Activated CD8-positive, alpha-beta T cell treated with anti-CD3 and anti-CD28 coated beads for 36 hours (primary cell): ENCODE measurements at regions of chr14 and their contacts with region 1.

Region 1: DNA sequence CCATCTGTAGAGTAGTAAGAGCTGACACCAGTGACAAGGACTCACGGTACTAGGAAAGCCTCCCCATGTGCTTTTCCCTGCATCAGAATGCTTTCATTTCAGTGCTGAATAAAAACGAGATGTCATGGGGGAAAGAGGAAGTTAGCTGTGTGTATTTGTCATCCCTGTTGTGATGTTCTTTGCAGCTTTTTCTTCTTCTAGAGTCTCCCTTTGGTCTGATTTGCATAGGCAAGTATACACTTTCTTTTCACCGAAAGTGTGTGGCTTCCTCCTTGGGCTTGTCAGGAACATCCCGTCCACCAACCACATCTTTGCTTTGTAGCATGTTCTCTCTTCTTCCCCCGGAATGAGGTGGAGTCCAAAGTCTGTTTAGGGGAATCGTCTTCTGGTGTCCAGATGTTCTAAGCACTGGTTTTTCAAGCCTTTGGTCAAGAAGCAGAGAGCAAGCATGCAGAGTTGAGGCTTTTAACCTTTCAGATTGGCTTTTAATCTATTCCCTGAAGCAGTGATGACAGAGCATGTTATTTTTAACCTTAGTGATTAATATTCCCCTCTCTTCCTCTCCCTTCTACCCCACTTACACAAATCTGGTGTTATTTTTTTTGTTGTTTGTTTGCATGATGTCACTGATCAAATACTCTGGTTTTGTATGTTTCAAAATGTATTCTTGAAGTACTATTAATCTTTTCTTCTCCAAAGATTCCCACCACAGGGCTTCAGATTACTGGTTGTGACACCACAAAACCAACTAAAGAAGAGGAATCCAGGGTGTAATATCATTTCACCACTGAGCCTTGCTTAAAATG is 163.4 kb downstream of the SAMD4A start:
- DNase-seq: peak; percentile 63
- ATAC-seq: peak; percentile 86
- H3K4me3 Mint-ChIP-seq: peak overlapping the region; percentile 60
- H3K27ac Mint-ChIP-seq: peak overlapping the region; percentile 90
- H3K4me1 Mint-ChIP-seq: peaks cover 45% of the 10 kb centered on the region
- H3K27me3 Mint-ChIP-seq: peaks cover 16% of the 10 kb centered on the region
- CTCF ChIP-seq: no peak

Region 2: GRCh38 chr14:54742492-54743350 is 12.4 kb after region 1 on chr14:
- CTCF ChIA-PET with region 1: interaction called, 12 read pairs
- POLR2A ChIA-PET with region 1: interaction called, 3 read pairs
- intact Hi-C with region 1: no loop called
- DNase-seq: peak; percentile 45
- ATAC-seq: peak; percentile 74
- H3K4me3 Mint-ChIP-seq: peak overlapping the region; percentile 27
- H3K27ac Mint-ChIP-seq: peak overlapping the region; percentile 68
- H3K4me1 Mint-ChIP-seq: peaks cover 46% of the 10 kb centered on the region
- H3K27me3 Mint-ChIP-seq: peaks cover 10% of the 10 kb centered on the region
- CTCF ChIP-seq: no peak

Region 3: GRCh38 chr14:54758041-54758440 is 27.7 kb after region 1 on chr14:
- CTCF ChIA-PET with region 1: no interaction called
- POLR2A ChIA-PET with region 1: no interaction called
- intact Hi-C with region 1: no loop called
- DNase-seq: no peak
- ATAC-seq: no peak
- H3K4me3 Mint-ChIP-seq: no peak overlapping the region
- H3K27ac Mint-ChIP-seq: no peak overlapping the region
- H3K4me1 Mint-ChIP-seq: peaks cover 20% of the 10 kb centered on the region
- H3K27me3 Mint-ChIP-seq: peaks cover 9% of the 10 kb centered on the region
- CTCF ChIP-seq: no peak

Region 4: DNA sequence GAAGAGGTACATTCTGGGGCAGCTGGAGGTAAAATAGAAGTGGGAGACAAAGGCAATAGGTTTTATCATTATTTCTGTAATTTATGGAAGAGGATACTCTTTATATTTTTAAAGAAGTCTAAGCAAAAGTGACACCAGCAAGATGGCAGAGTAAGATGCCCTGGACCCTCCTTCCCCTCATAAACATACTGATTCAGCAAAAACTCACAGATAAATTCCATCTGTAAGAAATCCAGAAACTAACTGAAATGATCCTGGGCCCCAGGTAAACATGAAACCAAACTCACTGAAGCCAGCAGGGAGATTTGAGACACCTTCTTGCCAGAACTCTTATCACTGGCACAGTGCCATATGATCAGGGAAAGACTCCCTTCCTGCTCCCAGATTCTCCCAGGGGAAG is 92.3 kb after region 1 on chr14:
- CTCF ChIA-PET with region 1: no interaction called
- POLR2A ChIA-PET with region 1: no interaction called
- intact Hi-C with region 1: no loop called
- DNase-seq: no peak
- ATAC-seq: no peak
- H3K4me3 Mint-ChIP-seq: no peak overlapping the region
- H3K27ac Mint-ChIP-seq: no peak overlapping the region
- H3K4me1 Mint-ChIP-seq: no peaks in the 10 kb centered on the region
- H3K27me3 Mint-ChIP-seq: peaks cover 2% of the 10 kb centered on the region
- CTCF ChIP-seq: no peak